ENCODE measurements at regions of chr10 and their contacts with region 1.

Region 1: GRCh38 chr10:92290837-92291615 is at the starts of genes CPEB3 and MARCHF5:
- DNase-seq: peak; percentile 95
- H3K4me3 Mint-ChIP-seq: peak within 1 kb of the TSS; percentile 81
- H3K27ac Mint-ChIP-seq: peak within 1 kb of the TSS; percentile 77
- H3K4me1 Mint-ChIP-seq: peaks cover 25% of the 10 kb centered on the region
- H3K27me3 Mint-ChIP-seq: no peaks in the 10 kb centered on the region
- total RNA-seq, gene CPEB3: 1.0 to 1.3 TPM
- total RNA-seq, gene MARCHF5: 26.1 to 28.1 TPM

Region 2: DNA sequence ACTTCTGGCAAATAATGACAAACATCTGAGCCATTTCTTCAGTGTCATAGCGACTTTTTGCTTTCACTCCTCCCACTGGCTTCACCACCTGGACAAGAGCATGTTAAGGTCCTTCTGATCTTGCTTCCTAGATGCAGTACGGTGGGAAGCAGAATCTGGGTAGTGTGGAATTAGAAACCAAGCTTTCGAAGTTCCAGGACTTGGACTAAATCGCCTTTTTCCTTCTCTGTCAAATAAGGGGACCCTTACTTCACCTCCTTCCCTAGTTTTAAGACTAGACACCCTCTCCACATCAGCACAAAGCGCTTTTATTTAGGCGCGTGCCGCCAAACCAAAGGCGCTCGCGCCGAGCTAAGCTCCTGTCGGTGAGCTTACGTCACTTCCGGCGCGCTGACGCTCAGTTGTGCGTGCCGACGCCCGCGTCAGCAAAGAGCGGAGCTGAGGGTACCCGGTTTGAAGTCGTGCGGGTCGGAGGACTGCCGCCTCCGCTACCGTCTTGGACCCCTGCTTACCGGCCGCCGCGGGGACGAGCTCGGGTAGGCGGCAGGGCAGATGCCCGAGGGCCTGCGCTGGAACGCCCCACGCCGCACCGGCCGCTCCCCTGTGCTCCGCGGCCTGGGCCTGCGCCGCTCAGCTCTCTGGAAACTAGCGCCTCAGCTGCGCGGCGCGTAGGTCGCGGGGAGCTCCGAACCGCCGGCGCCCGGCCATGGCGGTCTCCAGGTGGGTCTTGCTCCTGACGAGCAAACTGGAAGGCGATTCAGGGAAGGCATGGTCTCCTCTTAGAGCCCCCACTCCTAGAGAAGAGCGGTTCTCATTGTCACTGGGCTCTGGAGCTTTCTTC is 367.4 kb before region 1 on chr10 and contains the start of gene BTAF1:
- CTCF ChIA-PET with region 1: no interaction called
- intact Hi-C with region 1: loop called (anchors 5 kb)
- DNase-seq: peak; percentile 93
- H3K4me3 Mint-ChIP-seq: peak within 1 kb of the TSS; percentile 86
- H3K27ac Mint-ChIP-seq: peak within 1 kb of the TSS; percentile 99
- H3K4me1 Mint-ChIP-seq: peaks cover 35% of the 10 kb centered on the region
- H3K27me3 Mint-ChIP-seq: no peaks in the 10 kb centered on the region
- total RNA-seq, gene BTAF1: 42.6 to 43.6 TPM

Region 3: GRCh38 chr10:91955114-91955513 is 335.9 kb before region 1 on chr10:
- CTCF ChIA-PET with region 1: no interaction called
- intact Hi-C with region 1: loop called (anchors 5 kb)
- DNase-seq: no peak
- H3K4me3 Mint-ChIP-seq: no peak overlapping the region
- H3K27ac Mint-ChIP-seq: no peak overlapping the region
- H3K4me1 Mint-ChIP-seq: no peaks in the 10 kb centered on the region
- H3K27me3 Mint-ChIP-seq: no peaks in the 10 kb centered on the region

Region 4: DNA sequence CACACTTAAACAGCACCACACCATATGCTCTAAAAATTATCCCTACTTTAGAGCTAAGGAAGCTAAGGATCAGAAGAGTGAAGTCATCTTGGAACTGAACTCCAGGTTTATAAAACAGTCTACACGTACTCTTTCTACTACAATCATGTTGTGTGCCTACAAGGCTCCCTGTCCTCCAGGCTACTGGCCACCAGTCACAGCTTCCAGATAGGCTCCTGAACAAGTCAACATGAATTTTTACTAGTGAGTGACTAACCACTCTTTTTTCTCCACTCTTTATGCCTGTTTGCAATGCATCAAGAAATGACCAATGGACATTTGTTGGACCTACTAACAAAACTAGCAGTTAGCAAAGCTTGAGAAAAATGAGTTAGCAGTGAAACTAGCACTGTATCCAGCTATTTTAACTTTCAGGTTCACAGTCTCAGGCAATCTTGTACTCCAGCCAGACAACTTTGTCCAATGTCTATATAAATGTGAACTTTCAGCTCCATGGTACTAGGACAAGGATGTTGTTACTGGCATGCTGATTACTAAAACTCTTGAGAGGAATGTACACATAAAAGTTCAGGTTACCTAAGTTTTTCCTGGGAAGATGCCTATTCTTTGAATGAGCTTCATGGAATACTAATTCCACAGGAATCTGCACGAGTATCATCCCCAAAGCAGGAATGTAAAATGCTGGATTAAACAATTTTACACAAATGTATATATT is 187.5 kb before region 1 on chr10:
- CTCF ChIA-PET with region 1: no interaction called
- intact Hi-C with region 1: loop called (anchors 1 kb)
- DNase-seq: no peak
- H3K4me3 Mint-ChIP-seq: no peak overlapping the region
- H3K27ac Mint-ChIP-seq: no peak overlapping the region
- H3K4me1 Mint-ChIP-seq: peaks cover 6% of the 10 kb centered on the region
- H3K27me3 Mint-ChIP-seq: no peaks in the 10 kb centered on the region

Region 5: DNA sequence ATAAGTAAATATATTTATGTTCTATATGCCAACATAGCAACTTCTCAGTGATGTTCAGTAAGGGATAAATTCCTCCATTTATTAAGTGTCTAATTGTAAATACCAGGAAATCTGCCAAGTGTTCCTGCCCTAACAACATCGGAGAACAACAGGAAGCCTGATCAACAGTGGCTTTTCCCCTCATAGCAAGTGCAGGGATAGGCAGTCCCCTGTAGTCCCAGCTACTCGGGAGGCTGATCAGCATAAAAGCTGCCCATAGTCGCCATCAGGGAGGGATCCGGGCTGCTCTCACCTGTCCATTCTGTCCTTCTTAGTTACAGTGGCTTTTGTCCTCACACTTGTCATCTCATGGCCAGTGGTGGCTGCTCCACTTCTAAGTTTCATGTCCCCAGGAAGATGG is 141.6 kb after region 1 on chr10:
- CTCF ChIA-PET with region 1: no interaction called
- intact Hi-C with region 1: loop called (anchors 10 kb)
- DNase-seq: no peak
- H3K4me3 Mint-ChIP-seq: no peak overlapping the region
- H3K27ac Mint-ChIP-seq: no peak overlapping the region
- H3K4me1 Mint-ChIP-seq: no peaks in the 10 kb centered on the region
- H3K27me3 Mint-ChIP-seq: no peaks in the 10 kb centered on the region

Region 6: DNA sequence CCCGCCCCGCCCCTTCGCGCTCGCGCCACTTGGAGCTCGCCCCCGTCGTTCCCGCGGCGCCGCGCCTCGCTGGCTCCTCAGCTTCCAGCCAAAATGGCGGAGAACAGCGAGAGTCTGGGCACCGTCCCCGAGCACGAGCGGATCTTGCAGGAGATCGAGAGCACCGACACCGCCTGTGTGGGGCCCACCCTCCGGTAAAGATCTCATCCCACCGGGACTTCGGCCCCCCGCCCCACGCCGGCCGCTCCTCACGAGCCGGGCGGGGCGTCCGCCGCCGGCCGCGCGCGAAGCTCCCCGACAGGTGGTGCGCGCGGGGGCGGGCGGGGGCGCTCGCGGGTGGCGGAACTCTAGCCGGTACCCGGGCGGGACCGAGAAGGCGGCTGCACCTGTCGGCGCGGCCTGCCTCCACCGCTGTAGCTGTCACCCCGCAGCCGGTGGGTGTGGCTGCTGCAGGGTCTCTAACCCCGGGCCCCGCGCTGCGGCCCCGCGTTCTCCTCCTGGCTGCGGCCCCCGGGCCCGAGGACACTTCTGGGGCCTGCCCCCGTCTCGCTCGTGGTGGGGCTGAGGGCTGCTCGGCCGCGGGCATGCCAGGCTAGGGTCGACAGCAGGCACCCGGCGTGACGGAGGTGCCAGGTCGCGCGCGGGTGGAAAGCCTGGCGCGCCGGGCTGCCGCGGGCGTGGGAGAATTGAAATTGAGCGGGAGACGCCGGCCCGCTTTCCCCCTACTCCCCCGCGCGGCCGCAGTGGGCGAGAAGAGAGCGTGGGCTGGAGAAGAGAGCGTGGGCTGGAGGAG is 557.6 kb after region 1 on chr10 and contains the start of gene EXOC6:
- CTCF ChIA-PET with region 1: no interaction called
- intact Hi-C with region 1: loop called (anchors 5 kb)
- DNase-seq: peak; percentile 86
- H3K4me3 Mint-ChIP-seq: peak within 1 kb of the TSS; percentile 88
- H3K27ac Mint-ChIP-seq: peak within 1 kb of the TSS; percentile 61
- H3K4me1 Mint-ChIP-seq: peaks cover 24% of the 10 kb centered on the region
- H3K27me3 Mint-ChIP-seq: no peaks in the 10 kb centered on the region
- total RNA-seq, gene EXOC6: 7.6 to 9.3 TPM

Measured in activated naive CD4-positive, alpha-beta T cell treated with anti-CD3 and anti-CD28 coated beads for 36 hours (primary cell).